ENCODE measurements at regions of chr1 and their contacts with region 1.

Region 1: DNA sequence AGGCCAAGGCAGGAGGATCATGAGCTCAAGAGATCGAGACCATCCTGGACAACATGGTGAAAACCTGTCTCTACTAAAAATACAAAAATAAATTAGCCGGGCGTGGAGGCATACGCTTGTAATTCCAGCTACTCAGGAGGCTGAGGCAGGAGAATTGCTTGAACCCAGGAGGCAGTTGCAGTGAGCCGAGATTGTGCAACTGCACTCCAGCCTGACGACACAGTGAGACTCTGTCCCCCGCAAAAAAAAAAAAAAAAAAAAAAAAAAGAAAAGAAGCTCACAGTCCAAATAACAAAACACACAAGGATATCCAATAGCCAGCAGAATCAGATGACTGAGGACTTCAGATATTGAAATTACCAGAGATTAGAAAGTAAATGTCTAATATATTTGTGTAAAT is 11.8 kb downstream of the AHCTF1 start:
- DNase-seq: no peak
- H3K4me3 ChIP-seq: no peak overlapping the region
- H3K27ac ChIP-seq: no peak overlapping the region
- H3K4me1 ChIP-seq: peaks cover 3% of the 10 kb centered on the region
- H3K27me3 ChIP-seq: no peaks in the 10 kb centered on the region
- CTCF ChIP-seq: no peak
- POLR2A ChIP-seq: no peak

Region 2: DNA sequence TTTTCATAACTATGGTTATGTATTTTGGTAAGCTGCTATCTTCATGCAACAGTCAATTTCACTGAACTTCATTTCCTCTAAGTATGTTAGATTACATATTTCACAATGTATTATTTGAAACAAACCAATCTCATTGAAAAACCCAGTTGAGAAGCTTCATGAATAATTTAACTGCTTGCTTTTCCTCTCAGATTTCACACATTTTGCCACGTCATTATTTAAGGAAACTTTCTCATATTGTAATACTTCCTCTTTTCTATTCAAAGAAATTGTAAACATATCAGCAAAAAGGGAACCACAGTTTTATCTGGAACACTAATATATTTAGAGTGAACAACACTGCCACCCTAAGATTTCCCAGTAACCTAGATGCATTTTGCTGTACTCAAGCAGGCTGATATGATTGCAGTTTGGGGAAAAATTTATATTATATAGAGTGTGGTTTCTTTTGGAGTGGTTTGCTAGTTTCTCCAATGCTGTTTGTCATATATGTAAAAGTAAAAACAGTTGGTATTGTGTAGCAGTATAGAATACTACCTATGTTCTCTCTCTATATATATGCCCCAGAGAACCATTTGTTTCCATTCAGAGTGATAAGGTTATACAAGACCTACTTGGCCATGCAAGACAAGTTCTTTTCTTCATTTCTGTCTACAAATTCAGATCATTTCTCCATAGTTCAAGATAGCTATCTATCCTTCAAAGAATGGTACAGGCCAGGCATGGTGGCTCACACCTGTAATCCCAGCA is 40.2 kb after region 1 on chr1:
- intact Hi-C with region 1: loop called (anchors 10 kb)
- DNase-seq: no peak
- H3K4me3 ChIP-seq: no peak overlapping the region
- H3K27ac ChIP-seq: no peak overlapping the region
- H3K4me1 ChIP-seq: no peaks in the 10 kb centered on the region
- H3K27me3 ChIP-seq: no peaks in the 10 kb centered on the region
- CTCF ChIP-seq: no peak
- POLR2A ChIP-seq: no peak

Measured in testis (tissue), 5 donors.